ENCODE measurements at regions of chr21 and their contacts with region 1.

Region 1: GRCh38 chr21:30146558-30147302 is 19.9 kb downstream of the CLDN17 start:
- DNase-seq: peak; percentile 93
- H3K4me3 ChIP-seq: no peak overlapping the region
- H3K27ac ChIP-seq: peak overlapping the region; percentile 97
- H3K4me1 ChIP-seq: peaks cover 21% of the 10 kb centered on the region
- H3K27me3 ChIP-seq: no peaks in the 10 kb centered on the region
- CTCF ChIP-seq: no peak

Region 2: GRCh38 chr21:29073222-29074006 is 1073.3 kb before region 1 on chr21 and contains the start of gene CCT8:
- CTCF ChIA-PET with region 1: no interaction called
- dilution Hi-C with region 1: no loop called
- in situ Hi-C with region 1: no loop called
- intact Hi-C with region 1: loop called (anchors 10 kb)
- DNase-seq: peak; percentile 99
- H3K4me3 ChIP-seq: peak within 1 kb of the TSS; percentile 75 to 91 (median 88)
- H3K27ac ChIP-seq: peak within 1 kb of the TSS; percentile 87
- H3K4me1 ChIP-seq: peaks cover 24% of the 10 kb centered on the region
- H3K27me3 ChIP-seq: no peaks in the 10 kb centered on the region
- CTCF ChIP-seq: no peak
- total RNA-seq, gene CCT8: 124 to 195 TPM

Region 3: GRCh38 chr21:30072496-30072895 is 74.2 kb before region 1 on chr21:
- CTCF ChIA-PET with region 1: no interaction called
- dilution Hi-C with region 1: no loop called
- in situ Hi-C with region 1: no loop called
- intact Hi-C with region 1: loop called (anchors 1 kb)
- DNase-seq: peak; percentile 66
- H3K4me3 ChIP-seq: no peak overlapping the region
- H3K27ac ChIP-seq: no peak overlapping the region
- H3K4me1 ChIP-seq: no peaks in the 10 kb centered on the region
- H3K27me3 ChIP-seq: no peaks in the 10 kb centered on the region
- CTCF ChIP-seq: peak; percentile 67 to 78

Region 4: GRCh38 chr21:30227633-30228404 is 81.1 kb after region 1 on chr21:
- CTCF ChIA-PET with region 1: no interaction called
- dilution Hi-C with region 1: no loop called
- in situ Hi-C with region 1: no loop called
- intact Hi-C with region 1: loop called (anchors 5 kb)
- DNase-seq: peak; percentile 100
- H3K4me3 ChIP-seq: peak overlapping the region in 2 of 3 experiments; percentile 8 to 17
- H3K27ac ChIP-seq: peak overlapping the region; percentile 94
- H3K4me1 ChIP-seq: peaks cover 18% of the 10 kb centered on the region
- H3K27me3 ChIP-seq: no peaks in the 10 kb centered on the region
- CTCF ChIP-seq: no peak